Activated naive CD4-positive, alpha-beta T cell treated with anti-CD3 and anti-CD28 coated beads, Interleukin-2, amount 10 ng/mL, durations not matched to agents 7 days and 5 days (primary cell): ENCODE measurements at regions of chr2 and their contacts with region 1.

Region 1: DNA sequence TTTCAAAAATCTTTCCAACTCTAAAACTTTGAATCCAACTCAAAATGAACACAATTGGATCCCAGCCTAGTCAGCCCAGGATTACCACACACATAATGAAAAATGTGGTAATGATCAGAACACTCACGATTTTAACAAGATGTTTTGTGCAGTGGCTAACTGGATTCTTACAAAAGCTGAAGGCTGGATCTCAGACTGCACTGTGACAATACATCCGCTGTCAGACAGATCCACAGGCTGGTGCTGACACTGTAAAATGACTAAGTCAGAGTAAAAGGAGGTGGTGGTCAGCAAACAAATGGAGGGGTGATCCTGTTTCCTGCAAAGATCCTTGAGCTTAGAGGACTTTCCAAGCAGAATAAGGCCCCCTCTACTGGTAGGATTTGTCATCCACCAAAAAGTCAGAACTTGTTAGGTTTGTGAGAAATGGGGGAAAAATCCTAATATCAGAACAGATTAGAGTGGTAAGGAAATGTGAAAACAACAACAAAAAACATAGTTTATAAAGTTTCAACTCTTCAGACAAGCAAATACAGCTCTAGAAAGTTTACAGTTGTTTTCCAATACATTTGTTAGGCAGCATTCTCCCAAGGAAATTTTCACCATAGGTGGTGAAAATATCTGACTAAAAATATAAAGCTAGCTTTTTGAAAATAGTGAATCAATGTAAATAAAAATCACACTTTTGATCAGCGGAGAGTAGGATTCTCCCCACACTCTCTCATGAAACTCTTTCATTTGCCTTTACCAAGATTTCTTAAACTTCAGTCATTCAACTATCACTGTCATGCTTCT is 211.9 kb downstream of the AGPS start:
- DNase-seq: no peak
- H3K4me3 Mint-ChIP-seq: no peak overlapping the region
- H3K27ac Mint-ChIP-seq: no peak overlapping the region
- H3K4me1 Mint-ChIP-seq: peaks cover 1% of the 10 kb centered on the region
- H3K27me3 Mint-ChIP-seq: peaks cover 8% of the 10 kb centered on the region

Region 2: DNA sequence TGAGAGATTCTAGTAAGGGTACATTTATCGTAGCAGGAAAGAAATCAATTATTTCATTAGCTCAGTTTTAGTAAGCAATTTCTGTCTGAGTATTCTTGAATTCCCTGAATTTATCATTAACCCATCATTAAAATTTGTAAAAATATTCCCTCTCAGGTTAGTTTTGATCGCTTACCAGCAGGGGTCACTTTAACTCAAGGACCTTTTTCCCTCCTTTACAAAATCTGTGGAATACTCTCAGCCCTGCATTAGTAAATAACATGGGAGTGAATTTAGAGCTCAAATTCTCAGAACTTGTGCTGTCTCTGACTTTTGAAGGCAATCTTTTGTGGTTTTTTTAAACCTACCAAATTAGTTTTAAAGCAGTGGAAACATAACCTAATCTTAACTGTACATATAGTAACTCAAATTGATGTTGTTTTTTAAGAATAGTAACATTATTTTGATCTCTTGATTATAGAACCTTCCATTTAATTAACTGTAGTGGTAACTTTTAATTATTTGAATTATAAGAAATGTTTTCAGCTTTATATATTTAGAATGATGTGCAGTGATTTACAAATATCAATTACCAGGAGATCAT is 114.7 kb before region 1 on chr2:
- CTCF ChIA-PET with region 1: interaction called, 12 read pairs
- DNase-seq: no peak
- H3K4me3 Mint-ChIP-seq: no peak overlapping the region
- H3K27ac Mint-ChIP-seq: no peak overlapping the region
- H3K4me1 Mint-ChIP-seq: no peaks in the 10 kb centered on the region
- H3K27me3 Mint-ChIP-seq: no peaks in the 10 kb centered on the region

Region 3: GRCh38 chr2:177617849-177618248 is 13.4 kb after region 1 on chr2:
- CTCF ChIA-PET with region 1: interaction called, 15 read pairs
- DNase-seq: no peak
- H3K4me3 Mint-ChIP-seq: peak overlapping the region; percentile 89
- H3K27ac Mint-ChIP-seq: peak overlapping the region; percentile 87
- H3K4me1 Mint-ChIP-seq: peaks cover 10% of the 10 kb centered on the region
- H3K27me3 Mint-ChIP-seq: peaks cover 18% of the 10 kb centered on the region